Natural killer cell (primary cell): ENCODE measurements at regions of chr19 and their contacts with region 1.

Region 1: GRCh38 chr19:1189419-1189818 is 15.4 kb upstream of the SBNO2 start:
- DNase-seq: peak; percentile 66 to 71
- ATAC-seq: peak; percentile 84 to 94 (median 89)
- H3K4me3 ChIP-seq: no peak overlapping the region
- H3K4me3 Mint-ChIP-seq: peak overlapping the region; percentile 35
- H3K27ac ChIP-seq: no peak overlapping the region
- H3K27ac Mint-ChIP-seq: peak overlapping the region; percentile 66 to 88
- H3K4me1 ChIP-seq: peaks cover 41% of the 10 kb centered on the region
- H3K4me1 Mint-ChIP-seq: peaks cover 12 to 25% of the 10 kb centered on the region in 2 donors
- H3K27me3 ChIP-seq: no peaks in the 10 kb centered on the region
- H3K27me3 Mint-ChIP-seq: no peaks in the 10 kb centered on the region
- CTCF ChIP-seq: no peak

Region 2: GRCh38 chr19:1057176-1057855 is 132.1 kb before region 1 on chr19:
- intact Hi-C with region 1: loop called (anchors 5 kb)
- DNase-seq: peak in 1 of 2 donors; percentile 77
- ATAC-seq: peak; percentile 53 to 91 (median 85)
- H3K4me3 ChIP-seq: no peak overlapping the region
- H3K4me3 Mint-ChIP-seq: no peak overlapping the region
- H3K27ac ChIP-seq: no peak overlapping the region
- H3K27ac Mint-ChIP-seq: peak overlapping the region; percentile 54 to 71
- H3K4me1 ChIP-seq: peaks cover 8% of the 10 kb centered on the region
- H3K4me1 Mint-ChIP-seq: peaks cover 14 to 17% of the 10 kb centered on the region in 2 donors
- H3K27me3 ChIP-seq: no peaks in the 10 kb centered on the region
- H3K27me3 Mint-ChIP-seq: no peaks in the 10 kb centered on the region
- CTCF ChIP-seq: peak; percentile 18

Region 3: DNA sequence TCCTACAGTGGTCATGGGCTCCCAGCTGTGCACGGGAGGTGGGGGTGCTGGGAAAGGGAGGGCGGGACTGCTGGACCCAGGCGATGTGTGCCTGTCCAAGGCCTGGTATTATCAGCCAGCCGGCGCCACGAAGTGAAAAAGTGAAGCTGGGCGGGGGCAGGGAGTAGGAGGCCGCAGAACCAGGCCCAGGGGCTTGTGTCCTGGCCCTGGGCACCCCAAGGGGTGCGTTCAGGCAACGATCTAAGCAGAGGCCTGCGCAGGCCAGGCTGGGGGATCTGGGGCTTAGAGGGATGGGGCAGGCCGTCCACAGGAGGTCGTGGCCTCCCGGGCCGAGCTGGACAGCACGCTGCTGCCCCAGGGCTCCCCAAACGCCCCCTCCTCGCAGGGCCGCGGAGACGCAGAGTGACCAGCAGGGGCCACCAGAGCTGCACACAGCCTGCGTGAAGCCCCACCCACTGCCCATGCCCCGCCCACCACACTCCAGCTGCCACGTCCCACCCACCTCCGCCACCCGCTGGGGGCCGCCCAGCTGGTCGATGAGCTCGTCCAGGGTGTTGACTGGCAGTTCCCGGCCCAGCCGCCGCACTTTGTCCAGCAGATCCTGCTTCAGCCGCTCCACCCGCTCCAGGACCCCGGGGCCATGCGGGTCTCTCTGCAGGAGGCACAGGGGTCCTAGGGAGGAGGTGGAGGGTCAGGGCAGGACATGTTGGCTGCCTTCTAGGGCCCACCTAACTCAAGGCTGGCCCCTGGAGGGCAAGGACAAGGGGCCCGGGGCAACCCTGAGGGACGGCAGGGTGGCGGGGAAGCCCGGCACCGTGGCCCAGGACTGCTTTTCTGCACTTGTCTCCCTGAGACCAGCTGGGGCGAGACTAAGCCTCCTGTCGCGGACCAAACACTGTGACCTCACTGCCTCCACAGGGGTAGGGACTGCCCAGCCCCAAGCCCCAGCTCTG is 76.1 kb before region 1 on chr19:
- intact Hi-C with region 1: loop called (anchors 5 kb)
- DNase-seq: peak; percentile 86 to 91
- ATAC-seq: peak; percentile 89 to 98 (median 96)
- H3K4me3 ChIP-seq: no peak overlapping the region
- H3K4me3 Mint-ChIP-seq: no peak overlapping the region
- H3K27ac ChIP-seq: no peak overlapping the region
- H3K27ac Mint-ChIP-seq: peak overlapping the region in 1 of 2 donors; percentile 60
- H3K4me1 ChIP-seq: peaks cover 13% of the 10 kb centered on the region
- H3K4me1 Mint-ChIP-seq: no peaks in the 10 kb centered on the region
- H3K27me3 ChIP-seq: no peaks in the 10 kb centered on the region
- H3K27me3 Mint-ChIP-seq: no peaks in the 10 kb centered on the region
- CTCF ChIP-seq: peak; percentile 91

Region 4: DNA sequence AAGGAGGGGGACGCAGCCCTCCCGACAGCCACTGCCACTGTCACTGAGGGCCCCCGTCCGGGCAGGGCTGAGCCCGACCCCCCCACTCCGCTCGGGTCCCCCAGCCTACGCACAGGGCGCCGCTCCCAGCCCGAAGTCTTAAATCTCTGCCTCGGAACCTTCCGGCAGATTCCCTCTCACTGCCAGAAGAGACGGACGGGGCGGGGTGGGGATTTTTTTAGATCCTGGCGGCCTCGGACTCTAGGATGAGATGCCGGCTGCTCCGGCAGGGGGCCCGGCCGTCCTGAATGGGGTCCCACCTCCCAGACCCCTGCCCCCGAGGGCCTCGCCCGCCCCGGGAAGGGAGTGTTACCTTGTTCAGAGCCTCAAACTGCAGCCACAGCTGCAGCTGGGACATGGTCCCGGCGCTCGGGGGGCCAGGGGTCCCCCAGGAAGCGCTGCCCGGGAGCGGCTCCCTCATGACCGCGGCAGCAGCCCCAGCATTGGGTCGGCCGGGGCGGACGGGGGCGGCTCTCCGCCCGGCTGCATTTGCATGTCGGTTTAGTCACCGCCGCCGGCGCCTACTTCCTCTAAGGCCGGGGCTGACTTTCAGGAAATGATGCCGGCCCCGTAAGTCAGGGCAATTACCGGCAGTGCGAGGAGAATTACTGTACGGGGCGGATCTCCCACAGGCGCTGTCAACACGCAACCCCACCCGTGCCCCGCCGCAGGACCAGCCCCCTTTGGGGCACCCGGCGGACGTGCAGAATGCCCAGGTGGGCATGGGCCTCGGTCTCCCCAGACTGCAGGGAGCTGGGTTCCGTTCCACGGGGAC is 57.5 kb before region 1 on chr19:
- intact Hi-C with region 1: loop called (anchors 5 kb)
- DNase-seq: peak; percentile 83 to 92
- ATAC-seq: peak; percentile 62 to 79 (median 69)
- H3K4me3 ChIP-seq: peak overlapping the region; percentile 91
- H3K4me3 Mint-ChIP-seq: peak overlapping the region; percentile 91
- H3K27ac ChIP-seq: peak overlapping the region; percentile 88
- H3K27ac Mint-ChIP-seq: peak overlapping the region; percentile 89 to 96
- H3K4me1 ChIP-seq: peaks cover 75% of the 10 kb centered on the region
- H3K4me1 Mint-ChIP-seq: peaks cover 8 to 45% of the 10 kb centered on the region in 2 donors
- H3K27me3 ChIP-seq: no peaks in the 10 kb centered on the region
- H3K27me3 Mint-ChIP-seq: no peaks in the 10 kb centered on the region
- CTCF ChIP-seq: no peak